ENCODE measurements at regions of chr2 and their contacts with region 1.

Region 1: GRCh38 chr2:219441451-219442255 is 7.0 kb downstream of the SPEG start:
- DNase-seq: peak; percentile 86 to 93
- ATAC-seq: peak; percentile 55
- H3K4me3 ChIP-seq: peak overlapping the region; percentile 79 to 93
- H3K27ac ChIP-seq: peak overlapping the region; percentile 90 to 94
- H3K4me1 ChIP-seq: peaks cover 0 to 4% of the 10 kb centered on the region in 2 donors
- H3K27me3 ChIP-seq: no peaks in the 10 kb centered on the region

Region 2: GRCh38 chr2:219402665-219403515 is 38.8 kb before region 1 on chr2:
- intact Hi-C with region 1: loop called in 1 of 2 experiments (anchors 5 kb)
- DNase-seq: peak; percentile 78 to 79
- ATAC-seq: peak; percentile 76
- H3K4me3 ChIP-seq: no peak overlapping the region
- H3K27ac ChIP-seq: no peak overlapping the region
- H3K4me1 ChIP-seq: peaks cover 0 to 2% of the 10 kb centered on the region in 2 donors
- H3K27me3 ChIP-seq: no peaks in the 10 kb centered on the region

Region 3: DNA sequence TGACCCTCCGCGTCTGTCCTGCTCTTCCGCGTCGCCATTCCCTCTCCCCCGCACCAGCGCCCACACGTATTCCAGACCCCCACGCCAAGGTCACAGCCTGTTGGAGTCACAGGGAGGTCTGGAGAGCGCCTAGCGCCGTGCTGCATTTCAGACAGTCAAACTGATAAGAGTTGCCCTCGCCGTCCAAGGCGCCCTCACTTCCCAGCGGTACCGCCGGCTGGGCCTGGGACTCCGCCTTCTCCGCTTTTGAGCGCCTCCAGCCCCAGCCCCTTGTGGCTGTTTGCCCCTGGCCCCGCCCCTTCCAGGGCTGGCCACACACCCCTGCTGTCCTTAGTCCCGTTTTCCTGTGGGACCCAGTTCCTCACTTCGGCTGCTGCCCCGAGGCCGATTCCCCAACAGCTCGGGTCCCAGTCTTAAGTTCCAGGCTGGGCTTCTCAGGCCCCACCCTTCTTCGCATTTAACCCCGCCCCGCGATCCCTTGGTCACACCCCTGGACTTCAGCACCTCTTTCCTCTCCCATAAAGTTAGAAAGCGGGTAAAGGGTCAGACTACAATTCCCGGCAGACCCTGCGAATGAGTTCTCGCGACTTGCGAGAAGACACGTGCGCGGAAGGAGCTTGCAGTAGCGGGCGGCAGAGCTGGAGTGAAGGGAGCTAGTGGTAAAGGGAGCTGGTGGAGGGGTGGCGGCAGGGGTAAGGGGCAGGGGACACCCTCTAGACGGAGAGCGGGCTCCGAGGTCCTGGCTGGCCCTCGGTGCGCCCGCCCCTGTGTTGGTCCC is 56.8 kb after region 1 on chr2 and contains the start of gene GMPPA:
- intact Hi-C with region 1: loop called in 1 of 2 experiments (anchors 5 kb)
- DNase-seq: peak; percentile 98
- ATAC-seq: peak; percentile 92
- H3K4me3 ChIP-seq: peak within 1 kb of the TSS; percentile 69 to 74
- H3K27ac ChIP-seq: peak within 1 kb of the TSS; percentile 37 to 94
- H3K4me1 ChIP-seq: no peaks in the 10 kb centered on the region
- H3K27me3 ChIP-seq: no peaks in the 10 kb centered on the region
- total RNA-seq, gene GMPPA: 38.5 to 42.3 TPM

Region 4: GRCh38 chr2:219675221-219675620 is 233.6 kb after region 1 on chr2:
- intact Hi-C with region 1: no loop called
- DNase-seq: no peak
- ATAC-seq: no peak
- H3K4me3 ChIP-seq: no peak overlapping the region
- H3K27ac ChIP-seq: no peak overlapping the region
- H3K4me1 ChIP-seq: no peaks in the 10 kb centered on the region
- H3K27me3 ChIP-seq: no peaks in the 10 kb centered on the region